Activated naive CD4-positive, alpha-beta T cell treated with anti-CD3 and anti-CD28 coated beads for 36 hours (primary cell): ENCODE measurements at regions of chr11 and their contacts with region 1.

Region 1: DNA sequence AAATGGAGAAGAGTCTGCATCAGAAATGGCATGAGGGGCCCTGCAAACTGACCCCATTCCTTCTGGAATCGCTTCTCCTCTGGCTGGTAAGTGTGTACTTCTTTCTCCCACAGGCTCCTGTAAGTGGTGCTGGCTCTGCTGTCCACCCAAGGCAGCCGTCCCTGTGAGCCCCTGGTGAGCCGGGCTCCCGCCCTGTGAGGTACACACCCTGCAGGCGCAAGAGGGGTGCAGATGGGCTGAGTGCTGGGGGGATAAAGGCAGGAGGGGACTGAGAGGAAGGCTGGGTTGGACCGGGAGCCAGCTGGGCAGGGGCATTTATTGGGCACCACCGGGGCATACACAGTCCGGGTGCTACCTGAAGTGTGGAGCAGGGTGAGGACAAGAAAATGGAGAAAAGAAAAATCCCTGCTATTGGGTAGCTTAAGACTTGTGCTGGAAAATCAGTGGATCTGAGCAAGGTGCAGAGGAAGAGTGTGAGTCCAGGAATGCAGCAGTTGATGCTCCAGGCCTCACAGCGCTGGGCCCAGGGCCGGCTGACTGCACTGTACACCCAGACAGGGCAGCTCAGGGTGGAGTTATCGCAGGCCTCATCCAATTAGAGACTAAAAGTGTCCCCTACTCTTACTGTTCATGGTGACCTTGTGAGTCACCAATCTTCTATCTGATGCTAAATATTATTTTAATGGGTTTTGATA is 455.1 kb upstream of the B3GAT1 start:
- DNase-seq: no peak
- H3K4me3 Mint-ChIP-seq: no peak overlapping the region
- H3K27ac Mint-ChIP-seq: no peak overlapping the region
- H3K4me1 Mint-ChIP-seq: no peaks in the 10 kb centered on the region
- H3K27me3 Mint-ChIP-seq: peaks cover 8% of the 10 kb centered on the region

Region 2: DNA sequence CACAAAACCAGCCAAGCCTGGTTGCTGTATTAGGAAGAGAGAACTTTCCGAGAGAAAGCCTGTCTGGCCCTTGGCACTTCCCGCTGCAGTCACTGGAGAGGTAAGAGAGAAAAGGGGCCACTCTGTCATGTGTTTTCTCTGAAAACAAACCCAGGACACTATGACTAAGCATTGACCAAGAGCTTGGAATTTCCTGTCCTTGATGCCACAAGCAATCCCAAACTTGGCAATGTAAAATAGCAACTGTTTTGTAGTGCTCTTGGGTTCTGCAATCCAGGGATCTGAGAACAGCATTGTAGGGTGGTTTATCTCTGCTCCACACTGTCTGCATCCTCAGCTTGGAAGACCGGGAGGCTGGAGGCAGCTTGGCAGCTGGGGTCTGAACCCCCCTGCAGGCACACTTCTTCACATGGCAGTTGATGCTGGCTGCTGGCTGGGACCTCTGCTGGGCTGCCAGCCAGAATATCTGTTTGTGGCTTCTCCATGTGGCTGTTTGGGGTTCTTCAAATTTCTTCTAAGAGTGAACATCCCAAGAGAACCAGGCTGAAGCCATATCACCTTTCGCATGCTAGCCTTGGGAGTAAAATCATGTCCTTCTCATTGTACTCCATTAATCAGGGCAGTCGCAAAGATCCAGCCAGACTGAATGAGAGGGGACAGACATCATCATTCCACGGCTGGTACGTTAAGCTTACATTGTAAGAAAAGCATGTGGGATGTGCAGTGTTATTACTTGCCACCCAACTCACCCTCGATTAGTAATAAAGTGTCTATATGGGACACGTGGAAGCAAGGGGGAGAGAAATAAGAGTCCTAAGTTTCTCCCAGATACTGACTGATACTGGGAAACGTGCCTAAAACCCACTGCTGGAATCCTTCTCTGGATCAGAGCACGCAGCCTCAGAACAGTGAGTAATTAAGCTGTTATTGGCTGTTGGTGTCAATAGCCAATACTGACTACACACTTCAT is 82.3 kb after region 1 on chr11:
- CTCF ChIA-PET with region 1: no interaction called
- intact Hi-C with region 1: loop called (anchors 5 kb)
- DNase-seq: no peak
- H3K4me3 Mint-ChIP-seq: no peak overlapping the region
- H3K27ac Mint-ChIP-seq: no peak overlapping the region
- H3K4me1 Mint-ChIP-seq: no peaks in the 10 kb centered on the region
- H3K27me3 Mint-ChIP-seq: peaks cover 19% of the 10 kb centered on the region